ENCODE measurements at regions of chr1 and their contacts with region 1.

Region 1: GRCh38 chr1:241640029-241640818 is at the starts of genes CHML and OPN3:
- DNase-seq: peak; percentile 90
- H3K4me3 Mint-ChIP-seq: peak within 1 kb of the TSS; percentile 84
- H3K27ac Mint-ChIP-seq: peak within 1 kb of the TSS; percentile 85
- H3K4me1 Mint-ChIP-seq: peaks cover 54% of the 10 kb centered on the region
- H3K27me3 Mint-ChIP-seq: no peaks in the 10 kb centered on the region
- total RNA-seq, gene CHML: 17.8 and 20.8 TPM in 2 replicates
- total RNA-seq, gene OPN3: 9.5 and 11.1 TPM in 2 replicates

Region 2: DNA sequence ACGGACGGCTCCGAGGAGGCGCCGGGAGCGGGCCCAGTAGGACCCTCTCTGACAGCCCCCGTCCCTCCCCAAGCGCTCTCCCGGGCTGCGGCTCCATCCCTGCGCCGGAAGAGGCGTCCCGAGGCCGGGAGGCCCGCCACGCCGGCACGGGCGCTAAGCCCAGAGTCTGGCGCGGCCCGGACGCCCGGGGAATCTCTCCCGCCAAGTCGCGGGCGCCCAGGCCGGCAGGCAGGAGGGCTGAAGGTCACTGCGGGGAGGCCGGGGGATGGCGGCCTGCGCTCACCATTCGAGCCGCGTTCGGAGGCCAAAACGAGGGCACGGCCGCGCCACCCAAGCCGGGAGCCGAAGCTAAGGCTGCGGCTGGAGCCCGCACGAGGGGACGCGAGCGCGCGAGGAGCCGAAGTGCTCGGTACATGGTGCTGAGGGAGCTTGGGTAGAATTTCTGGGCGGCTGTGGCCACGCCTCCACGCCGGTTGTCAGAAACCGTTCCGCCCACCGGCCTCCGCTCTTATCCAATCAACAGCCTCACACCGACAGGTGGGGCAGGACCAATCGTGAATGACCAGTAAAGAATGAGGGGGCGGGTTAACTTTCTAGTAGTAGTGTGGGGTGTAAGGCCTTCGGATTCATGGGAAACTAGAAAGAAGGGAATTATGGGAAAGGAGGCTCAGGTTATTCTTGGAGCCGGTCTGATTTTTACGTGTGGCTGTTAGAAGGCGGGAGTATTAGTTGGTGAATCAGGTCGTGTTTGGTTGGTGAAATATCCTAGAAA is 120.7 kb before region 1 on chr1 and contains the start of gene FH:
- intact Hi-C with region 1: loop called (anchors 1 kb)
- DNase-seq: peak; percentile 91
- H3K4me3 Mint-ChIP-seq: peak within 1 kb of the TSS; percentile 91
- H3K27ac Mint-ChIP-seq: peak within 1 kb of the TSS; percentile 82
- H3K4me1 Mint-ChIP-seq: peaks cover 26% of the 10 kb centered on the region
- H3K27me3 Mint-ChIP-seq: peaks cover 26% of the 10 kb centered on the region
- total RNA-seq, gene FH: 94.5 and 101 TPM in 2 replicates

Region 3: GRCh38 chr1:241627453-241628259 is 12.6 kb before region 1 on chr1:
- intact Hi-C with region 1: loop called (anchors 1 kb)
- DNase-seq: peak; percentile 37
- H3K4me3 Mint-ChIP-seq: peak overlapping the region; percentile 77
- H3K27ac Mint-ChIP-seq: peak overlapping the region; percentile 76
- H3K4me1 Mint-ChIP-seq: peaks cover 25% of the 10 kb centered on the region
- H3K27me3 Mint-ChIP-seq: no peaks in the 10 kb centered on the region

Region 4: GRCh38 chr1:241677201-241677600 is 37.0 kb after region 1 on chr1:
- intact Hi-C with region 1: loop called (anchors 1 kb)
- DNase-seq: peak; percentile 32
- H3K4me3 Mint-ChIP-seq: peak overlapping the region; percentile 43
- H3K27ac Mint-ChIP-seq: peak overlapping the region; percentile 35
- H3K4me1 Mint-ChIP-seq: peaks cover 19% of the 10 kb centered on the region
- H3K27me3 Mint-ChIP-seq: peaks cover 5% of the 10 kb centered on the region

Region 5: DNA sequence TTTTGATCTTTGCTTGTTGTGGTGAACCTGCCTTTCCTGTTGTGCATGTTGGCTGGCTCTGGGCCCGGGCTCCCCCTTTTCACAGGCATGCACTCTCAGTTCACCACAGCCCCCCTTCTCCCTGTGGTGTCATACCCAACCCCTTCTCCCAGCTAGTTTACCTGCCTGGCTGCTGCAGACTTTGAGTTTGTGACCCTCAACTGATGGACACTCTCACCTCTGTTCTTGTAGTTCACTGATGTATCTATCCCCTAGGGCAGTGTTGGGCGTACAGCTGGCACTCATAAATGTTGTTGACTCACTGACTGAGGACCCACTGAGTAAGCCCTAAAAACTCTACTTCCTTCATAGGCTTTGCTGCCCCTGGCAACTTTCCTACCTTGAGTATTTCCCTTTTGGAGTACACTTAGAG is 66.7 kb after region 1 on chr1:
- intact Hi-C with region 1: no loop called
- DNase-seq: no peak
- H3K4me3 Mint-ChIP-seq: no peak overlapping the region
- H3K27ac Mint-ChIP-seq: peak overlapping the region; percentile 15
- H3K4me1 Mint-ChIP-seq: peaks cover 4% of the 10 kb centered on the region
- H3K27me3 Mint-ChIP-seq: no peaks in the 10 kb centered on the region